ENCODE measurements at regions of chr11 and their contacts with region 1.

Region 1: GRCh38 chr11:107549253-107549953 is 16.1 kb downstream of the ALKBH8 start:
- DNase-seq: peak; percentile 64
- H3K4me3 ChIP-seq: no peak overlapping the region
- H3K27ac ChIP-seq: no peak overlapping the region
- H3K4me1 ChIP-seq: peaks cover 18% of the 10 kb centered on the region
- H3K27me3 ChIP-seq: no peaks in the 10 kb centered on the region
- CTCF ChIP-seq: peak; percentile 61 to 64
- POLR2A ChIP-seq: no peak

Region 2: DNA sequence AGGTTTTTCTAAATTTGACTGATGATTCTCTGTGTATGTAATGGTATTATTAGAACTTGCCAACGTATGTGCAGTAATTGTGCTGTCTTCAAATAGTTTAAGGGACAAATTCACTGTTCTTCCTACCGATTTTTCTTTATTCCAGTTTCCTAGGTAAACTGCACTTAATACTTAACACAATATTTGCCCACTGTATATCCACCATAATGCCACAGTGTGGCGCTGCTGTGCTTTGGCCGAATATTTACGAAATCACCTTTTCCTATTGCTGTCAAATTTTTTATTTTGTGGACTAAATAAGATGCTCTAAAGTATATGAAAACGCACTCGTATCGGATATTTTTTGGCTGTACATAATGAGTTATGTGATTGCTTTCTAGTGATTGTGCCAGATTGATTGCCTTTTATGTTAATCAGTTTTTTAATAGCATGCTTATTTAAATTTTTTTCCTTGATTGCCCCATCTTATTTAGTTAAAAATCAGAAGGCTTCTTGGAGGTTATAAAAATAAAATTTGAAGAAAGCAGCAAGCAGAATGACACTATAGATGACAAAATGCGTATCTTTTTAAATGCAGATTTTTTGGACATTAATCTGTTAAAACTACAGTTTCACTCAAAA is 1461.5 kb before region 1 on chr11:
- CTCF ChIA-PET with region 1: interaction called, 3 read pairs
- POLR2A ChIA-PET with region 1: no interaction called
- dilution Hi-C with region 1: no loop called
- intact Hi-C with region 1: loop called (anchors 10 kb)
- DNase-seq: peak; percentile 72
- H3K4me3 ChIP-seq: no peak overlapping the region
- H3K27ac ChIP-seq: no peak overlapping the region
- H3K4me1 ChIP-seq: no peaks in the 10 kb centered on the region
- H3K27me3 ChIP-seq: no peaks in the 10 kb centered on the region
- CTCF ChIP-seq: peak; percentile 64 to 68
- POLR2A ChIP-seq: no peak

Region 3: GRCh38 chr11:107565219-107565937 is 16.0 kb after region 1 on chr11 and contains the start of gene ALKBH8:
- CTCF ChIA-PET with region 1: interaction called, 91 read pairs
- POLR2A ChIA-PET with region 1: no interaction called
- dilution Hi-C with region 1: no loop called
- intact Hi-C with region 1: loop called (anchors 1 kb)
- DNase-seq: peak; percentile 75
- H3K4me3 ChIP-seq: peak within 1 kb of the TSS; percentile 28 to 80 (median 79)
- H3K27ac ChIP-seq: peak within 1 kb of the TSS; percentile 48
- H3K4me1 ChIP-seq: peaks cover 36% of the 10 kb centered on the region
- H3K27me3 ChIP-seq: no peaks in the 10 kb centered on the region
- CTCF ChIP-seq: no peak
- POLR2A ChIP-seq: peak; percentile 67
- total RNA-seq, gene ALKBH8: 9.8 and 10.2 TPM in 2 replicates

Region 4: DNA sequence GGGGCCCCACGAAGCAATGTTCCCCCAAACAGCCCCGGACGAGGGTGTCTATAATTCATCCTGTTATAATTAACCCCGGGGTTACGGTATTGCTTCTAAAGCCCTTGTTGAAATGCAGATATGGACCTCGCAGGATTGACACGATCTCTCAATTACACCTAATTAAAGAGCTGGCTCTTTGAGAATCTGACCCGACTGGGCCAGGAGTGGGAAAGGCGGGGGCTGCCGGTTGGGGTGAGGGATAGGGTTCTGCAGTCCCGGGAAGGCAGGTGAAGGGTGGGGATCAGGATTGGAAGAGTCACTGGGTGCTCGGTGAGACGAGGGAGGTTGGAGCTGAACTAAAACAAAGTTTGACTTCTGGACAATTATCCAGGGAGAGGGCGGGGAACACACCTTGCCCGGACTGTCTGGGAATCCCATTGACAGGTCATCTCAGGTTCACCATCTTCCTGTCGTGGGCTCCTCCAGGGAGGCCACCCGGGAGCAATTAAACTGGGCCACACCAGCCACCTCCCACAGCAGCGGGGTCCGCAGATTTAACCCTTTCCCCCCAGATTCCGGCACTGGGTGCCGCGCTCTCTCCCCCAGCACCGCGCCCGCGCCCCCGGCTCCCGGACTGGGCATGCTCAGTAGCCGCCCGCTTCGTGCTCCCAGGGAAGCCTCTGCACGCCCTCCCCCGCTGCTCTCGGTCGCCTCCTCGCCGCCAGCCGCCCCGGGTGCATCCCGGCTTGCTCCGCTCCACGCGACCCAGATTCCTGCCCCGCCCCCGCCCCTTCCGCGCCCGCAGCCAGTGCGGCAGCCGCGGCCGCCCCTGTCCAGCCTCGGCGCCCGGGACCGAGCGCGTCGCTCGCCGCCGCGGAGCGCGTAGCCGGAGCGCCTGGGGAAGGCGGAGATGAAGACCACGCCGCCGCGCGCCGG is 41.3 kb after region 1 on chr11 and contains the start of gene ELMOD1:
- CTCF ChIA-PET with region 1: no interaction called
- POLR2A ChIA-PET with region 1: no interaction called
- dilution Hi-C with region 1: no loop called
- intact Hi-C with region 1: loop called (anchors 1 kb)
- DNase-seq: peak; percentile 46
- H3K4me3 ChIP-seq: peak within 1 kb of the TSS; percentile 5 to 86 (median 50)
- H3K27ac ChIP-seq: no peak within 1 kb of the TSS
- H3K4me1 ChIP-seq: peaks cover 12% of the 10 kb centered on the region
- H3K27me3 ChIP-seq: peaks cover 16 to 35% of the 10 kb centered on the region in 2 experiments
- CTCF ChIP-seq: peak in 1 of 2 donors; percentile 39
- POLR2A ChIP-seq: no peak
- total RNA-seq, gene ELMOD1: 0.53 and 2.4 TPM in 2 replicates

Region 5: GRCh38 chr11:107741044-107741823 is 191.8 kb after region 1 on chr11:
- CTCF ChIA-PET with region 1: interaction called, 14 read pairs
- POLR2A ChIA-PET with region 1: no interaction called
- dilution Hi-C with region 1: no loop called
- intact Hi-C with region 1: no loop called
- DNase-seq: peak; percentile 48
- H3K4me3 ChIP-seq: no peak overlapping the region
- H3K27ac ChIP-seq: no peak overlapping the region
- H3K4me1 ChIP-seq: no peaks in the 10 kb centered on the region
- H3K27me3 ChIP-seq: peaks cover 5 to 20% of the 10 kb centered on the region in 2 experiments
- CTCF ChIP-seq: peak; percentile 63 to 73
- POLR2A ChIP-seq: no peak

Region 6: DNA sequence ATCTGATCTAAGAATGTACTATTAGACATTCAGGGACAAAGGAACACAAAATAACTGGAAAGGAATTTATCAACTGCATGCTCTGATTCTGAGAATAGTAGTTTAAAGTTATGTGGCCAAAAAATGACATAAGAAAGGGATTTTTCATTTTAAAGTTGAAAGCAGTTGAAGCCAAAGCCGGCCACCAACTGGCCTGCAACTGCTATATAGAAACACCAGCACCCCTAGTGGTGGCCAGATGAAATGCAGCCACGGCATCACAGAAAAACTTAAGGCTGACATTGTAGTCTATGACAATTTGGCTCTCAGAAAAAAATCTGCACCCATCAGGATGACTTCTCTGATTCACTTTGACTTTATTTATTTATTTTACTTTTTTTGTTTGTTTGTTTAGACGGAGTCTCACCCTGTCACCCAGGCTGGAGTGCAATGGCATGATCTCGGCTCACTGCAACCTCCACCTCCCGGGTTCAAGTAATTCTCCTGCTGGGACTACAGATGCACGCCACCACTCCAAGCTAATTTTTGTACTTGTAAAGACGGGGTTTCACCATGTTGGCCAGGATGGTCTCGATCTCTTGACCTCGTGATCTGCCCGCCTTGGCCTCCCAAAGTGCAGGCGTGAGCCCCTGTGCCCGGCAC is 249.9 kb after region 1 on chr11:
- CTCF ChIA-PET with region 1: interaction called, 3 read pairs
- POLR2A ChIA-PET with region 1: no interaction called
- dilution Hi-C with region 1: no loop called
- intact Hi-C with region 1: loop called (anchors 5 kb)
- DNase-seq: peak; percentile 65
- H3K4me3 ChIP-seq: no peak overlapping the region
- H3K27ac ChIP-seq: no peak overlapping the region
- H3K4me1 ChIP-seq: no peaks in the 10 kb centered on the region
- H3K27me3 ChIP-seq: no peaks in the 10 kb centered on the region
- CTCF ChIP-seq: peak; percentile 86 to 88
- POLR2A ChIP-seq: no peak